Naive thymus-derived CD4-positive, alpha-beta T cell (primary cell): ENCODE measurements at regions of chr4 and their contacts with region 1.

Region 1: DNA sequence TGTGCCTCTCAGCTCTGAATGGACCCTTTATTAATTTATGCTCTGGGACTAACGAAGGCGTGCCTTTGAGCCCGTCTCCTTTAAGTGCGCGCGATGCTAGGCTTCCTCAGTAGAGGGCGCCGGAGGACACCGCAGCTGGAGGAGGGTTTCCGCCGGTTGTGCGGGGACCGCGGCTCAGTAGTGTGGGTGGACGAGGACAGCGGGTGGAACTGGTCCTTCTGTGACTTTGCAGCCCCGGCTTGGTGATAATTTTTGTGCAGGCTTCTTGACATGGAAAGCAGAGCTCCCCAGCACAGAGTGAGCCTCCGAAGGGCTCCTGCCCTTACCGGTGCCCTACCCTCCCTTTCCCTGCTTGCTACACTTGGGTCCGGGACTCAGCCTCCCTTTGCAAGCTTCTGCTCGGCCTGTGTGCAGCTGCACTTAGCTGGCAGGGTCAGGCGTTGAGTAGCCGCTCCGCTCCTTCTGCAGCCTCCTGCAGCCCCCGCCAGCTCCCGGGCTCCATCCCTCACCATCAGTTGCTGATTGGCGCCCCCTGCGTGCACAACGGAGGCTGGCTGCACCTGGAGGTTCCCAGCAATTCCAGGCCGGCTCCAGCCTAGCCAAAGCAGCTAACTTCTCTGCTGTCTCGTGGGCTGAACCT is 26.8 kb upstream of the BOD1L1 start:
- DNase-seq: peak; percentile 46 to 84 (median 69)
- ATAC-seq: peak; percentile 97
- H3K4me3 ChIP-seq: peak overlapping the region; percentile 77
- H3K4me3 Mint-ChIP-seq: peak overlapping the region; percentile 77 to 93 (median 90)
- H3K27ac ChIP-seq: no peak overlapping the region
- H3K27ac Mint-ChIP-seq: peak overlapping the region in 5 of 9 donors; percentile 25 to 70 (median 30)
- H3K4me1 ChIP-seq: no peaks in the 10 kb centered on the region
- H3K4me1 Mint-ChIP-seq: peaks cover 12 to 22% (median 16%) of the 10 kb centered on the region in 7 donors
- H3K27me3 ChIP-seq: no peaks in the 10 kb centered on the region
- H3K27me3 Mint-ChIP-seq: peaks cover 0 to 12% (median 4%) of the 10 kb centered on the region in 5 donors

Region 2: GRCh38 chr4:13627606-13628301 is 26.5 kb before region 1 on chr4 and contains the start of gene BOD1L1:
- CTCF ChIA-PET with region 1: interaction called, 7 read pairs
- POLR2A ChIA-PET with region 1: interaction called, 6 read pairs
- intact Hi-C with region 1: loop called (anchors 1 kb)
- DNase-seq: peak; percentile 63 to 86 (median 75)
- ATAC-seq: peak; percentile 88
- H3K4me3 ChIP-seq: peak within 1 kb of the TSS; percentile 96
- H3K4me3 Mint-ChIP-seq: peak within 1 kb of the TSS; percentile 83 to 100 (median 97)
- H3K27ac ChIP-seq: peak within 1 kb of the TSS; percentile 87
- H3K27ac Mint-ChIP-seq: peak within 1 kb of the TSS; percentile 94 to 100 (median 98)
- H3K4me1 ChIP-seq: peaks cover 17 to 24% of the 10 kb centered on the region in 2 donors
- H3K4me1 Mint-ChIP-seq: peaks cover 26 to 55% (median 51%) of the 10 kb centered on the region in 7 donors
- H3K27me3 ChIP-seq: no peaks in the 10 kb centered on the region
- H3K27me3 Mint-ChIP-seq: no peaks in the 10 kb centered on the region
- total RNA-seq, gene BOD1L1: 44.5 to 76.7 (median 54.2) TPM

Region 3: GRCh38 chr4:13970349-13970748 is 316.1 kb after region 1 on chr4:
- CTCF ChIA-PET with region 1: no interaction called
- POLR2A ChIA-PET with region 1: no interaction called
- intact Hi-C with region 1: loop called in 1 of 2 experiments (anchors 10 kb)
- DNase-seq: no peak
- ATAC-seq: no peak
- H3K4me3 ChIP-seq: no peak overlapping the region
- H3K4me3 Mint-ChIP-seq: no peak overlapping the region
- H3K27ac ChIP-seq: no peak overlapping the region
- H3K27ac Mint-ChIP-seq: no peak overlapping the region
- H3K4me1 ChIP-seq: no peaks in the 10 kb centered on the region
- H3K4me1 Mint-ChIP-seq: no peaks in the 10 kb centered on the region
- H3K27me3 ChIP-seq: no peaks in the 10 kb centered on the region
- H3K27me3 Mint-ChIP-seq: peaks cover 0 to 18% (median 0%) of the 10 kb centered on the region in 5 donors

Region 4: GRCh38 chr4:14787894-14788293 is 1133.6 kb after region 1 on chr4:
- CTCF ChIA-PET with region 1: no interaction called
- POLR2A ChIA-PET with region 1: no interaction called
- intact Hi-C with region 1: loop called in 1 of 2 experiments (anchors 2 kb)
- DNase-seq: no peak
- ATAC-seq: peak; percentile 72
- H3K4me3 ChIP-seq: no peak overlapping the region
- H3K4me3 Mint-ChIP-seq: no peak overlapping the region
- H3K27ac ChIP-seq: no peak overlapping the region
- H3K27ac Mint-ChIP-seq: no peak overlapping the region
- H3K4me1 ChIP-seq: no peaks in the 10 kb centered on the region
- H3K4me1 Mint-ChIP-seq: peaks cover 0 to 16% (median 0%) of the 10 kb centered on the region in 7 donors
- H3K27me3 ChIP-seq: peaks cover 0 to 4% of the 10 kb centered on the region in 2 donors
- H3K27me3 Mint-ChIP-seq: peaks cover 0 to 37% (median 36%) of the 10 kb centered on the region in 5 donors

Region 5: GRCh38 chr4:15162465-15163283 is 1508.4 kb after region 1 on chr4:
- CTCF ChIA-PET with region 1: interaction called, 3 read pairs
- POLR2A ChIA-PET with region 1: no interaction called
- intact Hi-C with region 1: loop called in 1 of 2 experiments (anchors 2 kb)
- DNase-seq: peak in 3 of 9 donors; percentile 2 to 8 (median 8)
- ATAC-seq: no peak
- H3K4me3 ChIP-seq: no peak overlapping the region
- H3K4me3 Mint-ChIP-seq: no peak overlapping the region
- H3K27ac ChIP-seq: no peak overlapping the region
- H3K27ac Mint-ChIP-seq: no peak overlapping the region
- H3K4me1 ChIP-seq: no peaks in the 10 kb centered on the region
- H3K4me1 Mint-ChIP-seq: peaks cover 0 to 3% (median 0%) of the 10 kb centered on the region in 7 donors
- H3K27me3 ChIP-seq: no peaks in the 10 kb centered on the region
- H3K27me3 Mint-ChIP-seq: peaks cover 17 to 33% (median 25%) of the 10 kb centered on the region in 5 donors

Region 6: GRCh38 chr4:15396157-15396800 is 1742.0 kb after region 1 on chr4:
- CTCF ChIA-PET with region 1: no interaction called
- POLR2A ChIA-PET with region 1: no interaction called
- intact Hi-C with region 1: loop called in 1 of 2 experiments (anchors 5 kb)
- DNase-seq: peak in 7 of 9 donors; percentile 31 to 57 (median 50)
- ATAC-seq: peak; percentile 85
- H3K4me3 ChIP-seq: no peak overlapping the region
- H3K4me3 Mint-ChIP-seq: no peak overlapping the region
- H3K27ac ChIP-seq: no peak overlapping the region
- H3K27ac Mint-ChIP-seq: peak overlapping the region in 1 of 9 donors; percentile 68
- H3K4me1 ChIP-seq: peaks cover 7 to 12% of the 10 kb centered on the region in 2 donors
- H3K4me1 Mint-ChIP-seq: peaks cover 10 to 52% (median 37%) of the 10 kb centered on the region in 7 donors
- H3K27me3 ChIP-seq: no peaks in the 10 kb centered on the region
- H3K27me3 Mint-ChIP-seq: no peaks in the 10 kb centered on the region

Region 7: GRCh38 chr4:15649914-15650545 is 1995.8 kb after region 1 on chr4:
- CTCF ChIA-PET with region 1: no interaction called
- POLR2A ChIA-PET with region 1: no interaction called
- intact Hi-C with region 1: loop called (anchors 2 kb)
- DNase-seq: peak; percentile 11 to 83 (median 79)
- ATAC-seq: peak; percentile 92
- H3K4me3 ChIP-seq: no peak overlapping the region
- H3K4me3 Mint-ChIP-seq: peak overlapping the region; percentile 53 to 74 (median 68)
- H3K27ac ChIP-seq: no peak overlapping the region
- H3K27ac Mint-ChIP-seq: peak overlapping the region in 8 of 9 donors; percentile 9 to 71 (median 54)
- H3K4me1 ChIP-seq: peaks cover 36 to 46% of the 10 kb centered on the region in 2 donors
- H3K4me1 Mint-ChIP-seq: peaks cover 39 to 85% (median 77%) of the 10 kb centered on the region in 7 donors
- H3K27me3 ChIP-seq: no peaks in the 10 kb centered on the region
- H3K27me3 Mint-ChIP-seq: no peaks in the 10 kb centered on the region